ENCODE measurements at regions of chr20 and their contacts with region 1.

Region 1: GRCh38 chr20:16528078-16528477 is 45.2 kb downstream of the KIF16B start:
- DNase-seq: peak; percentile 93
- ATAC-seq: peak; percentile 92
- H3K4me3 ChIP-seq: peak overlapping the region; percentile 11; the same call in 1 of the 2 replicates
- H3K27ac ChIP-seq: peak overlapping the region; percentile 73
- H3K4me1 ChIP-seq: peaks cover 36% of the 10 kb centered on the region
- H3K27me3 ChIP-seq: no peaks in the 10 kb centered on the region
- CTCF ChIP-seq: no peak

Region 2: DNA sequence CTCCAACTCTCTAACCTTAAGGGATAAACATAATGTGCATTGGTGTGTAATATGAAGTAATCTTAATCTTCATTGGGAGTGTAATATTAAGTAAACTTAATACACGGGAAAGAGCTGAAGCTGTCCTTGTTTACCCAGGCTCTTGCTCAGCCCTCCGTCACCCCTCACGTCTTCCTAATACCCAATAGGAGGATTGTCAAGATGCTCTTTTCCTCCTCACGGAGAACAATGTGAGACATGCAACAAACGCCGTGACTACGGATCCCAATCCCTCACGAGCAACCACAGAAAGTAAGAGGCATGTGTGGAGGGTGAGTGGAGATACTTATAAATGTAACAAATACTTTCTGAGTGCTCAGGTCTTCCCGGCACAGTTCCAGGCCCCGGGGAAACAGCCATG is 34.2 kb after region 1 on chr20:
- CTCF ChIA-PET with region 1: no interaction called
- POLR2A ChIA-PET with region 1: no interaction called
- intact Hi-C with region 1: loop called (anchors 1 kb)
- DNase-seq: peak; percentile 94
- ATAC-seq: peak; percentile 97
- H3K4me3 ChIP-seq: peak overlapping the region; percentile 61
- H3K27ac ChIP-seq: peak overlapping the region; percentile 78
- H3K4me1 ChIP-seq: peaks cover 28% of the 10 kb centered on the region
- H3K27me3 ChIP-seq: no peaks in the 10 kb centered on the region
- CTCF ChIP-seq: no peak